ENCODE measurements at regions of chr6 and their contacts with region 1.

Region 1: DNA sequence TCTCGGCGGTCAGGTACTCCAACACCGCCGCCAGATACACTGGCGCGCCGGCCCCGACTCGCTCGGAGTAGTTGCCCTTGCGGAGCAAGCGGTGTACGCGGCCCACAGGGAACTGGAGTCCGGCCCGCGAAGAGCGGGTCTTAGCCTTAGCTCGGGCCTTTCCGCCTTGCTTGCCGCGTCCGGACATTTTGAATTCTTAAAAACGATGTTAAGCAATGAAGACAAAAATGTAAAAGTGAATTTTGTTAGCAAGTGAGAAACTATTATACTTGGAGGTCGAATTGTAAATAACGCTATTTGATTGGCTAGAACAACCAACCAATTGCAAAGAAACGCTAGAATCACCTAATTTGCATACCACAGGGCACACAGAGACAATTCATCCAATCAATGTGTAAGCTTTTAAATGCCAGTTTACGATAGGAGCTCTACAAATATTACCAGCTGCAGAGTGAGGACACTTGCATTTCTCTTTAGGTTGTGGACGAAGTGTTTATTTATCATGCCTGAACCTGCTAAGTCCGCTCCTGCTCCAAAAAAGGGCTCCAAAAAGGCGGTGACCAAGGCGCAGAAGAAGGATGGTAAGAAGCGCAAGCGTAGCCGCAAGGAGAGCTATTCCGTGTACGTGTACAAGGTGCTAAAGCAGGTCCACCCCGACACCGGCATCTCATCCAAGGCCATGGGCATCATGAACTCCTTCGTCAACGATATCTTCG is 112.0 kb downstream of the HFE start:
- H3K4me3 ChIP-seq: peak overlapping the region; percentile 45
- H3K27ac ChIP-seq: no peak overlapping the region; the same call in 1 of the 2 replicates
- H3K4me1 ChIP-seq: no peaks in the 10 kb centered on the region
- CTCF ChIP-seq: no peak

Region 2: DNA sequence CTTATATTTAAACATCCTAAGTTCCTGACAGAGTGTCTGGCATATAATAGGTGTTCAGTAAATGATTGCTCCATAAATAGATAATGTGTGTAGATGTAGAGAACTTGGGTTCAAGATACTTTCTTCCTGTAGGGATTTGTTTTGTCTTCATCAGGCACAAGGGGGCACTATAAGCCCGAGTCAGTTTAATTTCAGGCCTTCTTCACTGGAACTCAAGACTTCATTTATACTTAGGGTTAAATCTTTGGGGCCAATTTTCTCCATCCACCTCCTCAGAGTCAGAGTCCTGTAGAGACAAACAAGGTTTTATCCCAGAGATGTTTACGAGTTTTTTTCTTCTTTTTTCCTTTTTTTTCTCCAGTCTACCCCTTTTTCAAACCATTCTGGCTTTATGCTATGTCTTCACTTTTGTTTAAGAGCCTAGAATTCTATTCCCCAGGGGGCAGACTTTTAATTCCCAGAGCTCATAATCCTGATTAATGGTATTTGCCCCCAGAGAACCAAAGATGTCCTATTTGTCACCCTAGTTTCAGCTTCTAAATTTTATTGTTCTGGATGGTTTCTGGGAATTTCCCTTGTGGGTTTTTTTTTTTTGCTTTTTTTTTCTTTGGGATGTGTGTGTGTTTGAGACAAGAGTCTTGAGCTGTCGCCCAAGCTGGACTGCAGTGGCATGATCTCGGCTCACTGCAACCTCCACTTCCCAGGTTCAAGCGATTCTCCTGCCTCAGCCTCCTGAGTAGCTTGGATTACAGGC is 23.6 kb before region 1 on chr6:
- CTCF ChIA-PET with region 1: interaction called, 5 read pairs
- POLR2A ChIA-PET with region 1: interaction called, 10 read pairs
- H3K4me3 ChIP-seq: no peak overlapping the region
- H3K27ac ChIP-seq: no peak overlapping the region
- H3K4me1 ChIP-seq: no peaks in the 10 kb centered on the region; the same call in 1 of the 2 replicates
- CTCF ChIP-seq: peak; percentile 39; the same call in 1 of the 2 replicates

Region 3: DNA sequence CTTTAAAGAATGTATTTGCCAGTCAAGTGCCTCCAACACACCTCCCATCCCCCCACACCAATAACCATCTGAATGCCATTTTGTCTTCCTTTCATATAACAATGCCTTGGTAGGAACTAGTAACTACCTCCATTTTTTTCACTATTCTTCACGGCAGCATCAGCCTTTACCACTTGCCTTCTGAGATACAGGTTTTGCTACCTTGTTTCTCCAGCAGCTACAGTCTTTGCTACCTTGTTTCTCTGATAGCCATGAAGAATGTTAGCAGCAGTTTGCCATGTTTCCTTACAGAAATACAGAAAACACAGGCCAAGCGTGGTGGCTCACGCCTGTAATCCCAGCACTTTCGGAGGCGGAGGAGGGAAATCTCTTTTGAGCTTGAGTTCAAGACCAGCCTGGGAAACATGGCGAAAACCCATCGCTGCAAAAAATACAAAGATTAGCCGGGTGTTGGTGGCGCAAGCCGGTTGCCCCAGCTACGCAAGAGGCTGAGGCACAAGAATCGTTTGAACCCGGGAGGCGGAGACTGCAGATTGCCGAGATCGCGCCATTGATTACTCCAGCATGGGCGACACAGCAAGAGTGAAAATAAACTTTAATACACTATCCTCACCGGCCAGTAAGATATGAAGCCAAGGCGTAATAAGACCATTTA is 11.1 kb before region 1 on chr6:
- CTCF ChIA-PET with region 1: interaction called, 8 read pairs
- POLR2A ChIA-PET with region 1: interaction called, 49 read pairs
- H3K4me3 ChIP-seq: peak overlapping the region; percentile 57
- H3K27ac ChIP-seq: peak overlapping the region; percentile 35; the same call in 1 of the 2 replicates
- H3K4me1 ChIP-seq: no peaks in the 10 kb centered on the region
- CTCF ChIP-seq: no peak

Region 4: DNA sequence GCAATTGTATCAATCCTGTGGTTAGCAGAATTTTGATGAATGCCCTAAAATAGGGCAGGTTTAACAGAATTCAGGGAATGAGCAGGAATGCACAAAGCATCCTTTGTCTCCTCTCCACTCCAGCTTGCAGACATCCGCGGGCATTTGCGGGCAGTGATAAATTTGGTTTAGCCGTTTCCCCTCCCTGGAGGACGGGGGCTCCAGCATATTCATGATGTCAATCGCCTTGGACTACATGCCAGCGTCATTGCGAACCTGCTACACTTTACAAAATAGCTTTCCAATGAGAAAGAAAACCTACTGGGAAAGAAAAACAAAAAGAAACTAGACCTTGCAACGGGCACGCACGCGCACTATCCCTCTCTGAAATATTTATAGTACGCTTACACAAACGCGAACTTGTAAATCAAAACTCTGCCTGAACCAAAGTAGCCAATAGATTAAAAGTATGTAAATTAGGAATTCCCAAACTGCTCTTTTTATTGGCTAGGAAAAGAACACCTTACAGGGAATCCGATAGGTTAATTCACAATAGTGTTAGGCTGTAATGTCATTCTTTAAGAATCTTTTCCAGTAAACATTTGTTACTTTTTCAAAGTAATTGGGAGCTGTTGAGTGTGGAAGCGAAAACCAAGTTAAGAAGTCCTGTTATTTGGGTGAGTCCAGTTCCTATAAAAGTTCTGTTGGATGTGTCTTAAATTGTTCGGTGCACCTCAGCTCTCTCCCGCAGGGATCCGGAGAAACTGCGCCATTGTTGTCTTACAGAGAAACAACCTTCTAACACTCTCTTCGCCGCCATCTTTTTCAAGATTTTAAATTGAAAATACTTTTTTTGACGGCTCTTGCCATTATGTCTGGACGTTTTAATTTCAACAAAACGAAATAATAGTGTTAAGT is 24.7 kb after region 1 on chr6:
- CTCF ChIA-PET with region 1: interaction called, 3 read pairs
- POLR2A ChIA-PET with region 1: interaction called, 12 read pairs
- H3K4me3 ChIP-seq: peak overlapping the region; percentile 68
- H3K27ac ChIP-seq: peak overlapping the region; percentile 61
- H3K4me1 ChIP-seq: no peaks in the 10 kb centered on the region
- CTCF ChIP-seq: no peak

Region 5: DNA sequence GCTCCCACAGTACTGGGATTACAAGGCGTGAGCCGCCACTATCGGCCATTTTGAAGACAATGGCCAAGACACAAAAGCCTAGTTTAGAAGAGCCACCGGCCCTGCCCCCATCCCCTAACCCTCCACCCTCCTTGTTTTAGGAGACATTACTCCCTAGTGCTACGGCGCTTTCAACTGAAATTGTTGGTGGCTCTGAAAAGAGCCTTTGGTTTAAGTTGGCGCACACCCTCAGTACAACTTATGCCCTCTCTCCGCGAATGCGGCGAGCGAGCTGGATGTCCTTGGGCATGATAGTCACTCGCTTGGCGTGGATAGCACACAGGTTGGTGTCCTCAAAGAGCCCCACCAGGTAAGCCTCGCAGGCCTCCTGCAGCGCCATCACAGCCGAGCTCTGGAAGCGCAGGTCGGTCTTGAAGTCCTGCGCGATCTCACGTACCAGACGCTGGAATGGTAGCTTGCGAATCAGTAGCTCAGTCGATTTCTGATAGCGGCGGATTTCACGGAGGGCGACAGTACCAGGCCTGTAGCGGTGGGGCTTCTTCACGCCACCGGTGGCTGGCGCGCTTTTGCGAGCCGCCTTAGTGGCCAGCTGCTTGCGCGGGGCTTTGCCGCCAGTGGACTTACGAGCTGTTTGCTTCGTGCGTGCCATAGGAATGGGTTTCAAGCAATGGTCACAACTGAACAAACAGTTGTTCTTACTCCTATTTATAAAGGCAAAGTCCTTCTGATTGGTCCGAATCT is 50.9 kb after region 1 on chr6:
- CTCF ChIA-PET with region 1: interaction called, 3 read pairs
- POLR2A ChIA-PET with region 1: interaction called, 16 read pairs
- H3K4me3 ChIP-seq: peak overlapping the region; percentile 33
- H3K27ac ChIP-seq: peak overlapping the region; percentile 80
- H3K4me1 ChIP-seq: no peaks in the 10 kb centered on the region
- CTCF ChIP-seq: no peak

Region 6: GRCh38 chr6:26285143-26286134 is 86.2 kb after region 1 on chr6:
- CTCF ChIA-PET with region 1: no interaction called
- POLR2A ChIA-PET with region 1: interaction called, 26 read pairs
- H3K4me3 ChIP-seq: peak overlapping the region; percentile 67
- H3K27ac ChIP-seq: peak overlapping the region; percentile 65
- H3K4me1 ChIP-seq: no peaks in the 10 kb centered on the region
- CTCF ChIP-seq: no peak

Measured in HEK293 (cell line).